Head of caudate nucleus (tissue), 42 donors: ENCODE measurements at regions of chr7 and their contacts with region 1.

Region 1: GRCh38 chr7:55964261-55965099 is at the start of gene NIPSNAP2:
- DNase-seq: peak in 41 of 42 donors; percentile 16 to 87 (median 73)

Region 2: DNA sequence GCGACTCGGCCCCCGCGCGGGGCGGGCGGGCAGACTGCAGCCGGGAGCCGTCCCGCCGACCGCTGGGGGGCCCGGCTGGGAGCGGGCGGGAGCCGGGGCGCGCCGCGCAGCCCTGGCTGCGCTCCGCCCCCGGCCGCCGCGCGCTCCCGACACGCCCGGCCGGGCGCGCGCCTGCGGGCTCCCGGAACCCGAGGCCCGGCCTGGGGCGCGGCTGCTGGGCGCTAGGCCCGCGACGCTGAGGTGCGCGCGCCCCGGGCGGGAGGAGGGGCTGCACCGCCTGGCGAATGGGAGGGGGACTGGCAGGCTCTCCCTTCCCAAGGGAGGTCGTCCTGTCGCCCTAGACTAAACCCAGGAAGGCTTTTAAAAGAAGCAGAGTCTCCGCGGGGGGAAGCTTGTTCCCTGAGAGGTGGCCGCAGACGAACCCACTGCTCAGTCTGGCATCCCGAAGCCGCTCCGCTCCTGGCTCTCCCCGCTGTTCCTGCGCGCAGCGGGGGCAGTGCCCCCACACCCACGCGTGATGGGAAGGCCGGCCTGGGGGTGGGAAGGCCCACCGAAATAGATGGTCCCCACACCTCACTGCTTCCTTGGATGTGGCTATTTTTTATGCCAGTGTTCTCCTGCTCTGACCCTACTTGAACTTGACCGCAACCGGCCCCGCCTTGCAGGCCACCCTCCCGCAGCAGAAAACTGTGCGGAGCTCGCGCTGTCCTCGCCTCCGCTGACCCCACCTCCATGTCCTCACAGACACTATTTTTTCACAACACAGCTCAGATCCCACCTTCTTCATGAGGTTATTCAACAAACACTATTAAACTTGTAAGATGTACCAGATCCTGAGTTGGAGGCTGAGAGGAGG is 391.9 kb before region 1 on chr7 and contains the start of gene VOPP1:
- intact Hi-C with region 1: no loop called
- DNase-seq: peak in 39 of 42 donors; percentile 5 to 79 (median 60)

Region 3: GRCh38 chr7:55893940-55894339 is 70.5 kb before region 1 on chr7:
- intact Hi-C with region 1: loop called (anchors 5 kb)
- DNase-seq: no peak

Region 4: DNA sequence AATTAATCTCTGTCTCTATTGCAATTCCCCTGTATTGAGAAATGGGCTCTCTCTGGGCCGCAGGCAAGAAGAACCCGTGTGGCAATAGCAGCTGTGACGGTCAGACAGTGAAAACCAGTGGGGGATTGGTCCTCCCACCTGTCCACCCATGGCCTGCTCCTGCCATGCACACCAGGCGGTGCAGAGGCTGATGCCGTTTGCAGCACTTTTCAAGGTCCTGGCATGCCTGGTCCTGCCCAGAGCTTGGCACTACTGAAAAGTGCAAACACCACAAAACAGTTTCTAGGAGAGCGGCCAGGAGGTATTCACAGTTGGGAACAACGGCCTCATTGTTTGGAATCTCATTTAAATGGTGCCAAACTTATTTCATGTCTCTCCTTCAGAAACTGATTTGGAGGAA is 45.2 kb after region 1 on chr7:
- intact Hi-C with region 1: loop called (anchors 5 kb)
- DNase-seq: peak; percentile 15 to 85 (median 61)

Region 5: GRCh38 chr7:56051339-56052191 is 87.1 kb after region 1 on chr7 and contains the starts of genes CCT6A and PSPH:
- intact Hi-C with region 1: loop called (anchors 2 kb)
- DNase-seq: peak; percentile 95 to 99 (median 99)